Activated CD4-positive, alpha-beta T cell treated with anti-CD3 and anti-CD28 coated beads for 36 hours (primary cell): ENCODE measurements at regions of chr20 and their contacts with region 1.

Region 1: DNA sequence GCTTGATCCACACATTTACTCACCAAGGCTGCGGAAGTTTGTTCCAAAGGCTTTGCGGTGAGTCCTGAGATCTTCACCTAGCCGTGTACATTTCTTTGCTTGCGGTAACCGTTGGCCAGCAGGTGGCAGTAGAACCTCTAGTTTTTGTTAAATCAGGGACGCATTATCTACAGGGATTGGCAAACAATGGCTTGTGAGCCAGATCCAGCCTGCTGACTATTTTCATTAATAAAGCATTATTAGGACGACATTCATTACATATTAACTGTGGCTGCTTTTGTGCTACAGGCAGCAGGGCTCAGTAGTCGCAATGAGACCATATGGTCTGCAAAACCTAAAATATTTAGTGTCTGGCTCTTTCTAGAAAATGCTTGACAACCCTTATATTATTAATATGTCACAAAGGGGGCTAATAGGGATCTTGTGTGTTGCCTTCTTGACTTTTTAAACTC is 174.1 kb downstream of the DOK5 start:
- DNase-seq: peak; percentile 84
- ATAC-seq: peak; percentile 53
- H3K4me3 Mint-ChIP-seq: no peak overlapping the region
- H3K27ac Mint-ChIP-seq: no peak overlapping the region
- H3K4me1 Mint-ChIP-seq: no peaks in the 10 kb centered on the region
- H3K27me3 Mint-ChIP-seq: peaks cover 10% of the 10 kb centered on the region

Region 2: DNA sequence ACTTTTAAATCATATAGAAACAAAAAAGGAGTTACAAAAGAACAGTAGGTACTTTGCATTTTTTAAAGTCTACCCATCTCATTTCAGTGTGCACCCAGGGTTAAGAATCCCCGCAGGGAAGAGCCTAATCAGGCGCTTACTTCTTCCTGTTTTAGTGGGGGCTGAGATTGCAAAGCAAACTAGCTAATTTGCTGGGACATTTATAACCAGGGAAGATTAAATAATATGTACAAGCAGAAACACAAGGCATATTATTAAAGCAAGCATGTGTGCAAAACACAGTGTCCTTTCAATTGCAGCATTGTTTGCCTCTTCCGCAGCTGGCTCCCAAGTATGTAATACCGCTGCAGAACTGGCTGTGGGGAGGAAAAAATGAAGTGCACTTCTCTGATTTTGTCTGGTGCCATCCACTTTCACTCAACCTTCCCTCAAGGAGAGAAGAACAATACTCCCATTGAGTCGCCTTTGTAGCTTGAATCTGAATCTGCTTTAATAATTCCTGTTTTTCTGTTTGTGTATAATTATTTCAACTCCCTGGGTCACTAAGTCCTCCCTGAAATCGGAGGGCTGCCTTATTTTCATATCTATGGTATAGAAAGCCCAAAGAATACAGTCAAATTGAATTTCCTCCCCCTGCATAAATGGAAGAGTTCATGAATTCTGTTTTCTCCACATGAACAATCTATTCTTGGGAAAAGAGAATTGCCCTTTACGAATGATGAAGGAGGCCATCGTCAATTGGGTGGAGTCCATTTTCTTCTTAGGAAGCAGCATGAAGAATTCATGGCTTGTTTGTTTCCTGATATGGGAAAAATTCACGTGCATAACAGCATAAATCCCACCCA is 555.9 kb before region 1 on chr20:
- CTCF ChIA-PET with region 1: interaction called, 5 read pairs
- POLR2A ChIA-PET with region 1: no interaction called
- intact Hi-C with region 1: loop called (anchors 1 to 2 kb)
- DNase-seq: no peak
- ATAC-seq: no peak
- H3K4me3 Mint-ChIP-seq: no peak overlapping the region
- H3K27ac Mint-ChIP-seq: no peak overlapping the region
- H3K4me1 Mint-ChIP-seq: no peaks in the 10 kb centered on the region
- H3K27me3 Mint-ChIP-seq: no peaks in the 10 kb centered on the region

Region 3: DNA sequence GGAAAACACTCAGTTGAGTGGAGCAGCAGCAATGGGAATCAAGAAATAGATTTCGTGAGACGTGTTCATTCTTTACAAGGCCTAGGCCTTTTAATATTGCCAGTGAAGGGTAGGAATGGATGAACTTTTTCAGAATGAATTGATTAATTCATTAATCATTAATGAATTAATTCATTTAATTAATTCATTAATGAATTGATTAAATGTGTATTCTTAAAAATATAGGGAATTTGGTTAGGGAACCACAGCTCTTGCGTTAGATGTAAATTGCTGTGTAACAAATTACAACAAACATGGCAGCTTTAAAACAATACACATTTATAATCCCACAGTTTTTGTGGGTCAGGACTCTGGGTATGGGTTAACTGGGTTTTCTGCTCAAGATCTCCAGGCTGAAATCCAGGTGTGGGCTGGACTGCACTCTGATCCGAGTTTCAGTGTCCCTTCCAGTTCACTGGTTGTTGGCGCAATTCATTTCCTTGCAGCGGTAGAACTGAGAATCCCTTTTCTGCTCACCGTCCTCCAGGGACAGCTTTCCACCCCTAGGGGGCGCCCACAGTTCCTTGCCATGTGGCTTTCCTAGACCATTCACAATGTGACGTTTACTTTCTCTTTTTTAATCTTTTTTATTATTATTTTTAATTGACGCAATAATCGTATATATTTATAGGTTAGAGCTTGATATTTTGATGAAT is 546.3 kb before region 1 on chr20:
- CTCF ChIA-PET with region 1: interaction called, 24 read pairs
- POLR2A ChIA-PET with region 1: no interaction called
- intact Hi-C with region 1: no loop called
- DNase-seq: peak; percentile 89
- ATAC-seq: peak; percentile 77
- H3K4me3 Mint-ChIP-seq: no peak overlapping the region
- H3K27ac Mint-ChIP-seq: no peak overlapping the region
- H3K4me1 Mint-ChIP-seq: peaks cover 5% of the 10 kb centered on the region
- H3K27me3 Mint-ChIP-seq: peaks cover 10% of the 10 kb centered on the region

Region 4: DNA sequence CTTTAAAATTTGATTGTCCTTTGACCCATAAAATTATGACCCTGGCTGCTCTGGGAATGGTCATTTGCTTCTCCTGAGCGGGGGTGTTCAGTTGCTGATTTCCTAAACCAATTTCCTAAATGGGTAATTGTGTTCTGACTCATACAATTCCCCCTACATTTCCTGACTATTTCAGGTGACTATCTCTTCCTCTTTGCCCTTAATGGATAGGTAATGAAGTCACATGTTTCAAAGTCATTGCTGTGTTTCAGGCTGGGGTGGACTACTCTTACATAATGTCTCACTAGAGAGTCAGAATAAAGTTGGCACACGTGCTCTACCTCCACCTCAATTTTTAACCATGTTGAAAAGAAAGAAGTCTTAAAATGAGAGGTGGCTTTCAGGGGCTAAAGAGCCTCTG is 64.3 kb before region 1 on chr20:
- CTCF ChIA-PET with region 1: no interaction called
- POLR2A ChIA-PET with region 1: no interaction called
- intact Hi-C with region 1: no loop called
- DNase-seq: no peak
- ATAC-seq: no peak
- H3K4me3 Mint-ChIP-seq: no peak overlapping the region
- H3K27ac Mint-ChIP-seq: no peak overlapping the region
- H3K4me1 Mint-ChIP-seq: no peaks in the 10 kb centered on the region
- H3K27me3 Mint-ChIP-seq: peaks cover 18% of the 10 kb centered on the region

Region 5: GRCh38 chr20:54759692-54760145 is 110.2 kb after region 1 on chr20:
- CTCF ChIA-PET with region 1: no interaction called
- POLR2A ChIA-PET with region 1: no interaction called
- intact Hi-C with region 1: no loop called
- DNase-seq: no peak
- ATAC-seq: no peak
- H3K4me3 Mint-ChIP-seq: no peak overlapping the region
- H3K27ac Mint-ChIP-seq: no peak overlapping the region
- H3K4me1 Mint-ChIP-seq: no peaks in the 10 kb centered on the region
- H3K27me3 Mint-ChIP-seq: no peaks in the 10 kb centered on the region

Region 6: DNA sequence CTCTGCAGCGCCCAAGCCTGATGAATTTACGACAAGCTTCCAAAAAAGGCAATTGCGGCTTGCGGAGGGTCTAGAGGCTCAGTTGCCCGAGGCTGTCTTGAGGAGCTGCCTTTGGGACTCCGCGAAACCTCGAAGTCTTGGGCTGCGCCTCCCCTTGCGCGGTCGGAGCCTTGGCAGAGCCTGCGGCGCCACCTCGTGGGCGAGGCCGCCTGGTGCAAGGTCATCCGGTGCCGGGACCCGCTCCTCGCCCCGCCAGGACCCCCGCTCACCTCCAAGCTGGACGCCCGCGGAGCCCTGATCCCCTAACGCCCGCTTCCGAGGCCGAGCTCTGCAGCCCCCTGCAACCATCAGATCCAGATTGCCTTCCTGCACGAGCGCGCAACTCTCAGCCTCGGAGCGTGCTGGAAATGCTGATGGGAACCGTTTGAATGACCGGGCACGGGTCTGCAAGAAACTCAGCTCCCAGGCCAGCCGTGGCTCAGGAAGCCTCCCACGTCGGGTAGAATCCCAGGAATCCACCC is 1694.4 kb after region 1 on chr20:
- CTCF ChIA-PET with region 1: interaction called, 3 read pairs
- POLR2A ChIA-PET with region 1: no interaction called
- intact Hi-C with region 1: loop called in 1 of 2 experiments (anchors 10 kb)
- DNase-seq: peak; percentile 77
- ATAC-seq: peak; percentile 88
- H3K4me3 Mint-ChIP-seq: no peak overlapping the region
- H3K27ac Mint-ChIP-seq: no peak overlapping the region
- H3K4me1 Mint-ChIP-seq: peaks cover 2% of the 10 kb centered on the region
- H3K27me3 Mint-ChIP-seq: peaks cover 49% of the 10 kb centered on the region